GM10248 (cell line): ENCODE measurements at regions of chr14 and their contacts with region 1.

Region 1: GRCh38 chr14:54782751-54783679 is 119.6 kb downstream of the GCH1 start:
- DNase-seq: peak; percentile 78
- CTCF ChIP-seq: peak; percentile 53

Region 2: DNA sequence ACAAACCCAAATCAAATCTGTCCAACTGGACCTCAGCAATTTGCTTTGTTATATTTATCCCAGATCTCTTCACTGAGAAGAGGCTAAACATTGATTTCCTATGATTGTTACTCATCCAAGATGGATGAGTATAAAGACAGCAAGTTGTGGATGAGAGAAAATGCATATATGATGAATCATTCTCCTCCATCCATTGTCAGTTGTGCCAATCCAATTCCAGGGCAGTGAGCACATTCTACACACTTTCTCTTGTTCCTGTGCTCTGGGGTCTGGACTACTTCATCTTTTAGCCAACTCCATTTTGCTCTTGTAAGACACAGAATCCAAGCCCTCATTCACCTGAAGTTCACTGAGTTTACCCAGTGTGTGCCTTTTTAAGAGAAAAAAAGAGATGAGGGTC is 13.9 kb after region 1 on chr14:
- CTCF ChIA-PET with region 1: interaction called, 39 read pairs
- POLR2A ChIA-PET with region 1: no interaction called
- DNase-seq: no peak
- CTCF ChIP-seq: no peak